ENCODE measurements at regions of chr14 and their contacts with region 1.

Region 1: DNA sequence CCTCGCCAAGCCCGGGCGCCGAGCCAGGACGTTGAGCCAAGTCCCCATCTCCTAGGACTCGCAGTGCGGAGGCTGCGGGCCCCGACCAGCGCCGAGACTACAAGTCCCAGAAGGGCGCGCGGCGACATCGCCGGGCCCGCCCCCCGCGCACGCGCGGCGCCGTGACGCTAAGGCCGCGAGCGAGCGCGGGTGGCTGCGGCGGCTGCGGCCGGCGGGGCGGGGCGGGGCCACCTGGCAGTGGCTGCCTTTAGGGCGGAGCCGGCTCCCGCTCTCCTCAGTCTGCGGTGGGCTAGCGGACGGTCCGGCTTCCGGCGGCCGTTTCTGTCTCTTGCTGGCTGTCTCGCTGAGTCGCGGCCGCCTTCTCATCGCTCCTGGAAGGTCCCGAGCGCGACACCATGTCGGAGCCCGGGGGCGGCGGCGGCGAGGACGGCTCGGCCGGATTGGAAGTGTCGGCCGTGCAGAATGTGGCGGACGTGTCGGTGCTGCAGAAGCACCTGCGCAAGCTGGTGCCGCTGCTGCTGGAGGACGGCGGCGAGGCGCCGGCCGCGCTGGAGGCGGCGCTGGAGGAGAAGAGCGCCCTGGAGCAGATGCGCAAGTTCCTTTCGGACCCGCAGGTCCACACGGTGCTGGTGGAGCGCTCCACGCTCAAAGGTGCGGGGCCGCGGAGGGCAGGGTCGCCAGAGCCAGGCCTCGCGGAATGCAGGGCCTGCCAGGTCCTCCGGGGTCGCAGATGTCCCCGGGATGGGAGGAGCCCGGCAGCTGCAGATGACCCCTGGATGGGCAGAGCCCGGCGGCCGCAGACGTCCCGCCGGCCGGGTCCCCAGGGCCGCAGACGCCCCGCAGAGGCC is at the start of gene DYNC1H1:
- DNase-seq: peak; percentile 95
- H3K4me3 ChIP-seq: peak within 1 kb of the TSS; percentile 97
- H3K27ac ChIP-seq: peak within 1 kb of the TSS; percentile 61
- H3K4me1 ChIP-seq: peaks cover 30% of the 10 kb centered on the region
- CTCF ChIP-seq: no peak
- total RNA-seq, gene DYNC1H1: 207 and 209 TPM in 2 replicates

Region 2: DNA sequence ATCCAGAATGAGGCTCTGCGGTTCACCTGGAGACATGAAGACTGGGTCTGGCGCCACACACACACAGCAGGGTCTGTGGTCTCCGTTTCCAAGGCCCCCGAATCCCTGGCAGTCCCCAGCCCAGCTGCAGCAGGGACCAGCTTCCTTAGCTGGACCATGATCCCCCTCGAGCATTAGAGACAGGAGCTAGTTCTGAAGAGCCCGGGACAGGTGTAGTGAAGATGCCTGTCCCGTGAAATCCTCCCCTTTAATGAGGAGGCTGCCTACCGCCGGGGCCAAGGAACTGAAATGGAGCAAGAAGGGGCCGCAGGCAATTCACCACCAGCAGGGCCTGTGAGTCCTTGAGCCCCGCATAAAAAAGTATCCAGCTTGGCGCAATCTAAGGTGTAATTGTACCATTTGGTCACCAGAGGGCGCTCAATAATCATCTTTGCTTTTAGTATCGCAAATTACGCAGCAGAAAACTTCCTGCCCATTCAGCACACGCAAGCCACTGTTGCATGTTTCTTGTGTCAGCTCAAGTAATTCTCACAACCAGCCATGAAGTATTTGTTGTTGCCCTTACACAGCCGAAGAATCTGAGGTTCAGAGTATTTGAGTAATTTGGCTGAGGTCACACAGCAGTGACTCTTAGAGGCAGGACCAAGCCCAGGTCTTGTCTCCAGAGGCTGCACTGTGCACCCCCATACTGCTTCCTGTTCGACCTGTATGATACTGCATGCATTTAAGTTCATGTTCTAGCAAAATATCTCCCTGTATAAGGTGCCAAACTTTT is 257.3 kb before region 1 on chr14:
- CTCF ChIA-PET with region 1: no interaction called
- POLR2A ChIA-PET with region 1: no interaction called
- intact Hi-C with region 1: loop called (anchors 2 kb)
- DNase-seq: peak; percentile 83
- H3K4me3 ChIP-seq: no peak overlapping the region
- H3K27ac ChIP-seq: no peak overlapping the region
- H3K4me1 ChIP-seq: peaks cover 6% of the 10 kb centered on the region
- CTCF ChIP-seq: peak; percentile 94

Region 3: GRCh38 chr14:101939646-101940170 is 24.8 kb before region 1 on chr14:
- CTCF ChIA-PET with region 1: no interaction called
- POLR2A ChIA-PET with region 1: no interaction called
- intact Hi-C with region 1: no loop called
- DNase-seq: no peak
- H3K4me3 ChIP-seq: no peak overlapping the region
- H3K27ac ChIP-seq: no peak overlapping the region
- H3K4me1 ChIP-seq: no peaks in the 10 kb centered on the region
- CTCF ChIP-seq: no peak

Region 4: DNA sequence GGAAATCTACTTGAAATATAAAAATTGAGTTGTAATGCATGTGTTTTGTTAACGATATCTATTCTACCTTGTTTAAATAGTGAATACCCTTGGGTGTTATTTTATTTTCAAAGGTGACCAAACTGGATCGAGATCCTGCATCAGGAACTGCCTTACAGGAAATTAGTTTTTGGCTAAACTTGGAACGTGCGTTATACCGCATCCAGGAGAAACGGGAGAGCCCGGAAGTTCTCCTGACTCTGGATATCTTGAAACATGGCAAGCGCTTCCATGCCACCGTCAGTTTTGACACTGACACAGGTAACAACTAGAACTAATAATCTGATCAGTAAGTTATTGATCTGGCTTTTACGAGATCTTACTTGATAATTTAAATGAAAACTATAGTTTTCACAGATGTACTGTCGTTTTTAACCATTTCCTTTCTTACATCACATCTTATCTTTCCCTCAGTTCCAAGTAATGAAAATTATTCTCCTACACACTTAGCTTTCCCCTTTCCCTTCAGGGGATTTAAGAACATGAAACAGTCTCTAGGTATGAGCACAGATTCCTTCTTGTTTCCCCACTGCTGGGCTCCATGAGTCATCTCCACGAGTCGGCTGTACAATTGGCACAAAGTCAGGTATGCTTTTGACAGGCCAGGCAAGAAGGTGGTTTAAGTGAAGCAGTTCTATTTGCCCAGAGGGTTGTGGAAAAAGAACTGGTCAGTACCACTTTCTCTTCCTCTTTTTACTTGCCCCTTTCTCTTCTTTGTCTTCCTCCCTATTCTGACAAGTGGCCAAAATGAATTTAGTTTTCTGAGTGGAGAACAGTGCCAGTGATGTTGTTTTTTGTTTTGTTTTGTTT is 16.0 kb after region 1 on chr14:
- CTCF ChIA-PET with region 1: no interaction called
- POLR2A ChIA-PET with region 1: interaction called, 5 read pairs
- intact Hi-C with region 1: loop called (anchors 1 kb)
- DNase-seq: peak; percentile 51
- H3K4me3 ChIP-seq: no peak overlapping the region
- H3K27ac ChIP-seq: no peak overlapping the region
- H3K4me1 ChIP-seq: peaks cover 8% of the 10 kb centered on the region
- CTCF ChIP-seq: no peak

Region 5: GRCh38 chr14:102043251-102044025 is 78.9 kb after region 1 on chr14:
- CTCF ChIA-PET with region 1: no interaction called
- POLR2A ChIA-PET with region 1: interaction called, 4 read pairs
- intact Hi-C with region 1: loop called (anchors 5 kb)
- DNase-seq: no peak
- H3K4me3 ChIP-seq: no peak overlapping the region
- H3K27ac ChIP-seq: no peak overlapping the region
- H3K4me1 ChIP-seq: no peaks in the 10 kb centered on the region
- CTCF ChIP-seq: no peak

Region 6: DNA sequence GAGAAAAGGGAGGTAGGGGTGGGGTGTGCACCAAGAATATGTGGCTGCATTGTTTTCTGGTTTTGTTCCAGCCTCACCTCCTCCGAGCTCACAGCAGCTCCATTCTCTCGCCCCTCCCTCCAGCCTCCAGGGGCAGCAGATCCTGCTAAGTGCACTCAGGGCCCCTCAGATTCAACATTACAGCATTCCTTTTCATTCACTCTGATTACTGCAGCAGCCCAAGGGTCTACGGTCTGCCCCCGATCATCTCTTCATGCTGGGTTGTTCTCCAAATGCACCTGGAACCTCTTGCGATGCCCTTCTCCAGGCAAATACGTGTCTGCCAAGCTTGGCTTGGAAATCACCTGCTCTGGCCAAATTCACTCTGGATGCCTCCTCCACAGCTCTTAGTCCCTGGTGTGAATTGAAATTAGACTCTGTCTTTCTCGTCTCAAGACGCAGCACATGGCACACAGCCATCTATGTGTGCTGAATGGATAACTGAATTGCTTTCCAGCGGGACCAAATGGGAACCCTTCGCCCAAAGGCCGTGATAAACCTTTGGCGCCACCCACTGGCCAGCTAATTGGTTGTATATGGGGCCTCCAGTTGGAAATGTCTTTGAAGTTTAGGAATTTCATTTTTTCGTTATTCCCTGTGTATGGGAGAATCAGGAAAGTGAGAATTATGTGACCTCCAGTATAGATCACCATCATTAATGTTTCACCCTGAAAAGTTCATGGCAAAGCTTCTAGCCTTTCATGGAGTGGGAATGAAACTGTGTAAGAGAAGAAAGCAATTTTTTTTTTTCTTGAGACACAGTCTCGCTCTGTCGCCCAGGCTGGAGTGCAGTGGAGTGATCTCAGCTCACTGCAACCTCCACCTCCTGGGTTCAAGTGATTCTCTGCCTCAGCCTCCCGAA is 131.9 kb after region 1 on chr14:
- CTCF ChIA-PET with region 1: interaction called, 4 read pairs
- POLR2A ChIA-PET with region 1: no interaction called
- intact Hi-C with region 1: loop called (anchors 1 kb)
- DNase-seq: peak; percentile 74
- H3K4me3 ChIP-seq: no peak overlapping the region
- H3K27ac ChIP-seq: no peak overlapping the region
- H3K4me1 ChIP-seq: peaks cover 7% of the 10 kb centered on the region
- CTCF ChIP-seq: peak; percentile 98